ENCODE measurements at regions of chr2 and their contacts with region 1.

Region 1: GRCh38 chr2:112726497-112727190 is 5.8 kb downstream of the NT5DC4 start:
- DNase-seq: peak; percentile 89 to 96 (median 95)
- ATAC-seq: peak; percentile 91 to 93
- H3K4me3 ChIP-seq: no peak overlapping the region
- H3K27ac ChIP-seq: no peak overlapping the region
- H3K4me1 ChIP-seq: no peaks in the 10 kb centered on the region
- H3K27me3 ChIP-seq: no peaks in the 10 kb centered on the region

Region 2: DNA sequence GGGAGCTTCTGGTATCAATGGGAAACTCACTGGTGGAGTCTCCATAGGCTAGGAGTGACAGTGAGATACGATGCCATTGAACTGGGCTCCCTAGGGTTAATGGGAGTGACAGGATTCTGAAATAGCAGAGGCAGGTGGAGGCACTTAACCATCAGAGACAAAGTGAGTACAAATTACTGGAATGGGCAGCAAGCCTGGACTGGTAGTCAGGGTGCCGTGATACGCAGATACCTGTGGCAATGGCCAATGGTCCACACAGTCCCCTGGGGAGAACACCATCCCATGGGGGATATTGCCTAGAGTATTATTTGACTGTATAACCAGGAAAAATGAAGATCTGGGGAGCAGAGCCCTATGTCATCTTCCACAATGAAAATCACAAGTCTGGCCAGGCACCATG is 124.9 kb before region 1 on chr2:
- intact Hi-C with region 1: loop called in 2 of 4 experiments (anchors 2 to 5 kb)
- DNase-seq: no peak
- ATAC-seq: no peak
- H3K4me3 ChIP-seq: no peak overlapping the region
- H3K27ac ChIP-seq: no peak overlapping the region
- H3K4me1 ChIP-seq: no peaks in the 10 kb centered on the region
- H3K27me3 ChIP-seq: no peaks in the 10 kb centered on the region

Region 3: GRCh38 chr2:112626604-112627059 is 100.0 kb before region 1 on chr2:
- intact Hi-C with region 1: loop called (anchors 2 to 5 kb)
- DNase-seq: peak; percentile 64 to 88 (median 79)
- ATAC-seq: peak; percentile 69 to 77
- H3K4me3 ChIP-seq: no peak overlapping the region
- H3K27ac ChIP-seq: peak overlapping the region; percentile 97
- H3K4me1 ChIP-seq: peaks cover 9% of the 10 kb centered on the region
- H3K27me3 ChIP-seq: no peaks in the 10 kb centered on the region

Region 4: DNA sequence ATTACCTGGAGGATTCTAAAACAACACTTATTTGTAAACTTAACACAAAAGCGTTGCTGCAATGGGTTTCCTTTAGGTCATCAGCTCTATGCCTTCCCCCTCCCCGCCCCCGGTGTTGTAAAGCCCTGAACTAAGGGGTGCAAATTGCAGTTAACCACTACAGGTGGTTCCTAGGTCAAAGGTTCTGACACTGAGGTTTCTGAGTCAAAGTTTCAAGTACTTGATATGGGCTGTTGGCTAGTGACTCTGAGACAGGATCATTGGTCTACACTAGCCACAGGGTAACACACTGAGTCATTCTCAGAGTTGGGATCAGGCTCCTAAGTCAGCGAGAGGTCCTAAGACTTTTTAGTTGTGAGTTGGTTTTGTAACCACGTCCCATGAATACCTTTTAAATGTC is 94.5 kb after region 1 on chr2:
- intact Hi-C with region 1: no loop called
- DNase-seq: no peak
- ATAC-seq: no peak
- H3K4me3 ChIP-seq: no peak overlapping the region
- H3K27ac ChIP-seq: no peak overlapping the region
- H3K4me1 ChIP-seq: peaks cover 4% of the 10 kb centered on the region
- H3K27me3 ChIP-seq: no peaks in the 10 kb centered on the region